Breast epithelium (tissue), 4 donors: ENCODE measurements at regions of chr2 and their contacts with region 1.

Region 1: GRCh38 chr2:44877417-44877816 is 64.1 kb upstream of the SIX3 start:
- DNase-seq: no peak
- H3K4me3 ChIP-seq: no peak overlapping the region
- H3K27ac ChIP-seq: no peak overlapping the region
- H3K4me1 ChIP-seq: no peaks in the 10 kb centered on the region
- H3K27me3 ChIP-seq: peaks cover 0 to 6% of the 10 kb centered on the region in 2 donors
- CTCF ChIP-seq: no peak
- POLR2A ChIP-seq: no peak

Region 2: DNA sequence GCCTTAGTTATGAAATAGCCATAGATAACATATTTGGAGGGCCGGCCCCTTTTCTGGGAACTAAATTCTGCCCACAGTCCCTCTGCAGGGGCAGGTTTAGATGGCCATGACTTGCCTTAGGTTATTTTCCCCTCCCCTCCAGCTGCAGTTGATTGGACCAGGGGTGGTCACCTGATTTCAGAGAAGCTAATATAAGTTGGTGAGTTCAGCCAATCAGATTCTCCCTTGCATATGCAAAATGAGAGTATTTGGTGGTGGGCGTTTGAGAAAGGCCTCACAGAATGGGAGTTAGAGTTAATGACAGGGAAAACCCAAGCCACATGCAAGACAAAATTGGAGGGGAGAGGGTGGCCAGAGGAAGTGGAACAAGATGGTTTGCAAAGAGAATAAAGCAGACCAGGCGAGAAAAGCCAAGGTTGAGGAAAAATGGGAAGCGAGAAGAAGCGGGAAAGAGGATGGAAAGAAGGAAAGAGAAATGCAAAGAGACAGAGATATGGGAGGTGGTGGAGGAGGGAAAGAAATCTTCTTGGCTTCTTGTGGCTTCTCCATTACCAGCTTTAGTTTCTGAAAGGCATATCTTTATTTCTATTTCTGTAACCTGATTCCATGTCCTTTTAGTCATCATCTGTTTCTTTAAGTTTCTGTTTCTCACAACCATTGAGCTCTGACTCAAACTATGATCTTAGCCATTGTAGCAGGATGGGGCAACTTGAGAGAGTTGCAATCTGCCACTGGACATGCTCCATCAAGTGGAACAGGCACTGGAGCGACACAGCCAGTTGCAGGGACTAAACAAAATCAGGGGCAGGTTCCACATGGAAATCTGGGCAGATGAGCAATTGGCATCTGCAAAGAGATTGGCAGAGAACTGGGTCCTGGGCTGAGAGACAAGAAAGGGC is 44.0 kb before region 1 on chr2:
- intact Hi-C with region 1: loop called (anchors 2 kb)
- DNase-seq: no peak
- H3K4me3 ChIP-seq: no peak overlapping the region
- H3K27ac ChIP-seq: no peak overlapping the region
- H3K4me1 ChIP-seq: no peaks in the 10 kb centered on the region
- H3K27me3 ChIP-seq: no peaks in the 10 kb centered on the region
- CTCF ChIP-seq: no peak
- POLR2A ChIP-seq: no peak

Region 3: DNA sequence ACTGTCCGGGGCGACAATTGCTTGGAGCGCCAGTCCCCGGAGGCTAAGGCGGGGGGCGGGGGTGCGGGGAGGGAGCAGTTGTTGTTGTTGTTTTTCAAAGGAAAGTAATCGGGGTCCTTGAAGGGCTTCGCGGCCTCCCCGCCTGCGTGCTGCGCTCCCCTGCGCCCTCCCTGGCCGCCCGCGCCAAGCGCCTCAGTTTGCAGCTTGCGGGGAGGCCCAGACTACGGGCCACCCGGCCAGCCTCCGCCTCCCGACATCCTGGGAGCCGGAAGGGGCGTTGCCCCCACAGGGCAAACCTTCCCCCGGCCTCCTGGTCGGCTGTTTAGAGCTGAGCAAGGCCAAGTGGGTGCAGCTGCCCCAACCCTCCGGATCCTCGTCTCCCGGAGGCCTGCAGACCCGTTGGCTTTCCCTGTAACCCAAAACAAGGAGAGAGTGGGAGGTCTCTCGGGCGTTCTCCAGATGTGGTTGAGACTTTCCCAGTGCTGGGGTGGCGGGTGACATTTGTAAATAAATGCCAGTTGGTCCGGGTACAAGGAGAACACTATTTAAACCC is 60.3 kb after region 1 on chr2:
- intact Hi-C with region 1: no loop called
- DNase-seq: peak in 1 of 2 donors; percentile 41
- H3K4me3 ChIP-seq: peak overlapping the region in 2 of 3 donors; percentile 50 to 64
- H3K27ac ChIP-seq: no peak overlapping the region
- H3K4me1 ChIP-seq: peaks cover 4 to 25% of the 10 kb centered on the region in 2 donors
- H3K27me3 ChIP-seq: peaks cover 7 to 98% of the 10 kb centered on the region in 2 donors
- CTCF ChIP-seq: no peak
- POLR2A ChIP-seq: no peak